Uterus (tissue), 4 donors: ENCODE measurements at regions of chr1 and their contacts with region 1.

Region 1: GRCh38 chr1:93629099-93630059 is 52.3 kb downstream of the BCAR3 start:
- DNase-seq: peak in 1 of 2 donors; percentile 57
- H3K4me3 ChIP-seq: no peak overlapping the region
- H3K27ac ChIP-seq: no peak overlapping the region
- H3K4me1 ChIP-seq: no peaks in the 10 kb centered on the region
- H3K27me3 ChIP-seq: no peaks in the 10 kb centered on the region
- CTCF ChIP-seq: peak; percentile 79 to 93 (median 86)
- POLR2A ChIP-seq: no peak

Region 2: GRCh38 chr1:93556291-93556690 is 73.1 kb before region 1 on chr1:
- intact Hi-C with region 1: no loop called
- DNase-seq: no peak
- H3K4me3 ChIP-seq: no peak overlapping the region
- H3K27ac ChIP-seq: peak overlapping the region in 1 of 2 donors; percentile 45
- H3K4me1 ChIP-seq: no peaks in the 10 kb centered on the region
- H3K27me3 ChIP-seq: no peaks in the 10 kb centered on the region
- CTCF ChIP-seq: no peak
- POLR2A ChIP-seq: no peak

Region 3: GRCh38 chr1:93814059-93814794 is 184.8 kb after region 1 on chr1:
- intact Hi-C with region 1: loop called (anchors 10 kb)
- DNase-seq: peak; percentile 38 to 40
- H3K4me3 ChIP-seq: no peak overlapping the region
- H3K27ac ChIP-seq: no peak overlapping the region
- H3K4me1 ChIP-seq: no peaks in the 10 kb centered on the region
- H3K27me3 ChIP-seq: no peaks in the 10 kb centered on the region
- CTCF ChIP-seq: peak; percentile 78 to 96 (median 91)
- POLR2A ChIP-seq: no peak

Region 4: GRCh38 chr1:93846211-93846991 is 217.0 kb after region 1 on chr1:
- intact Hi-C with region 1: loop called (anchors 10 kb)
- DNase-seq: peak; percentile 86 to 88
- H3K4me3 ChIP-seq: peak overlapping the region; percentile 76 to 80
- H3K27ac ChIP-seq: peak overlapping the region; percentile 97
- H3K4me1 ChIP-seq: peaks cover 0 to 5% of the 10 kb centered on the region in 2 donors
- H3K27me3 ChIP-seq: no peaks in the 10 kb centered on the region
- CTCF ChIP-seq: peak; percentile 14 to 48 (median 40)
- POLR2A ChIP-seq: peak in 1 of 2 donors; percentile 66